ENCODE measurements at regions of chr1 and their contacts with region 1.

Region 1: DNA sequence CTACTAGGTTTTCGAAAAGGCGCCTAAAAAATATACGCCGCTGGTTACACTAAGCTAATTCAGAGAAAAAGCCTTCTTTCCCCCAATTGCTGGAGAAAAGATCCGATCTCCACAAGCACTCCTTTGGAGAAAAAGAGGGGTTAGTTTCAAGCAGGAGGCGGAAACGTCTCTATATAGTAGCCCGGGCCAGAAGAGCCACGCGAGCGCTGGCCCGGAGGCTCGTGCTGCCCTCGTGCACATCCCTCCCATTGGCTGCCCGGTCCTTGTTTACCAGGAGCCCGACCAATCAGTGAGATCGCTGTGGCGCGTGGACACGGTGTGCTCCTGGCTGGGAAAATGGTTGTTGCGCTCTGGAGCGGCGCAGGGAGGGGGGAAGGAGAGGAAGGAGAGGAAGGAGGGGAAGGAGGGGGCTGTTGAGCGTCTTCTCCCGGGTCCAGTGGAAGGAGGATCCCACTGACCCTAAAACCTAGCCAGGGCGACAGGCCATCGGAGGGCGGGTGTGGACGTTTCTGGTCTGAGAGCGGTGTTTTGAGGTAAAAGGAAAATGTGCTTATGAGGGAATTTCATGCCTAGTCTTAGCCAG is at the start of gene TXNIP:
- DNase-seq: peak; percentile 97
- H3K4me3 Mint-ChIP-seq: peak within 1 kb of the TSS; percentile 88
- H3K27ac Mint-ChIP-seq: peak within 1 kb of the TSS; percentile 92
- H3K4me1 Mint-ChIP-seq: peaks cover 63% of the 10 kb centered on the region
- H3K27me3 Mint-ChIP-seq: no peaks in the 10 kb centered on the region
- total RNA-seq, gene TXNIP: 82.6 to 88.8 TPM

Region 2: DNA sequence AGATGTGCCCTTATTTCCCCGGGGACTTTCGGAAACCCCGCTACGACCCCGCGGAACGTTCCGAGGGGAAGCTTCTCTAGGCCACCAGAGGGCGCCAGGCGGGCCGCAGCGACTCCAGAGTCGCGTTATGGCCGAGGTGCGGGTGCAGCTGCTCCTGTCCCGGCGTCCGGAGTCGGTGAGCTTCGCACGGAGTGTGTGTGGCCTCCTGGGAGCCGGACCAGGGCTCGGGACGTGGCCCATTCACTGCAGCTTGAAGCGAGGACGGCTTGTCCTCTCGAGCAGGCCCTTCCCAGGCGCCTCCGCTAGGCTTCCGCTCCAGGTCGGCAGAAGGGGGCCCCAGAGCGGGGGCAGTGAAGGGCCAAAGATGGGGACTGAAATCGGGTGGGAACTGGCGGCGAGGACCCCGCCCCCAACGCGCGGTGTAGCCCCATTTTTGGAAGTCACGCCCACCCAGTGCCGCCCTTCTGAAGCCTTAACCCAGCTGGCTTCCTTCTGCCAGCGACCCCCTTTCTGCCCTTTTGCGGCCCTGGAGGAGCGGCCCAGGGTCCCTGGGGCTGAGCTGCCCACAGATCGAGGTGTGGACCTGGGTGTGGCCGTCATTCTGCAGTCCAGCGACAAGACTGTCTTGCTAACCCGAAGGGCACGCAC is 150.9 kb before region 1 on chr1 and contains the start of gene NUDT17:
- CTCF ChIA-PET with region 1: no interaction called
- POLR2A ChIA-PET with region 1: no interaction called
- intact Hi-C with region 1: no loop called
- DNase-seq: peak; percentile 80
- H3K4me3 Mint-ChIP-seq: no peak within 1 kb of the TSS
- H3K27ac Mint-ChIP-seq: peak within 1 kb of the TSS; percentile 12
- H3K4me1 Mint-ChIP-seq: peaks cover 11% of the 10 kb centered on the region
- H3K27me3 Mint-ChIP-seq: no peaks in the 10 kb centered on the region
- total RNA-seq, gene NUDT17: 2.8 to 3.8 TPM

Region 3: GRCh38 chr1:145918144-145918992 is 78.2 kb before region 1 on chr1 and contains the start of gene PEX11B:
- CTCF ChIA-PET with region 1: no interaction called
- POLR2A ChIA-PET with region 1: interaction called, 4 read pairs
- intact Hi-C with region 1: loop called (anchors 1 kb)
- DNase-seq: peak; percentile 94
- H3K4me3 Mint-ChIP-seq: peak within 1 kb of the TSS; percentile 90
- H3K27ac Mint-ChIP-seq: peak within 1 kb of the TSS; percentile 96
- H3K4me1 Mint-ChIP-seq: peaks cover 45% of the 10 kb centered on the region
- H3K27me3 Mint-ChIP-seq: no peaks in the 10 kb centered on the region
- total RNA-seq, gene PEX11B: 22.8 to 25.6 TPM

Region 4: DNA sequence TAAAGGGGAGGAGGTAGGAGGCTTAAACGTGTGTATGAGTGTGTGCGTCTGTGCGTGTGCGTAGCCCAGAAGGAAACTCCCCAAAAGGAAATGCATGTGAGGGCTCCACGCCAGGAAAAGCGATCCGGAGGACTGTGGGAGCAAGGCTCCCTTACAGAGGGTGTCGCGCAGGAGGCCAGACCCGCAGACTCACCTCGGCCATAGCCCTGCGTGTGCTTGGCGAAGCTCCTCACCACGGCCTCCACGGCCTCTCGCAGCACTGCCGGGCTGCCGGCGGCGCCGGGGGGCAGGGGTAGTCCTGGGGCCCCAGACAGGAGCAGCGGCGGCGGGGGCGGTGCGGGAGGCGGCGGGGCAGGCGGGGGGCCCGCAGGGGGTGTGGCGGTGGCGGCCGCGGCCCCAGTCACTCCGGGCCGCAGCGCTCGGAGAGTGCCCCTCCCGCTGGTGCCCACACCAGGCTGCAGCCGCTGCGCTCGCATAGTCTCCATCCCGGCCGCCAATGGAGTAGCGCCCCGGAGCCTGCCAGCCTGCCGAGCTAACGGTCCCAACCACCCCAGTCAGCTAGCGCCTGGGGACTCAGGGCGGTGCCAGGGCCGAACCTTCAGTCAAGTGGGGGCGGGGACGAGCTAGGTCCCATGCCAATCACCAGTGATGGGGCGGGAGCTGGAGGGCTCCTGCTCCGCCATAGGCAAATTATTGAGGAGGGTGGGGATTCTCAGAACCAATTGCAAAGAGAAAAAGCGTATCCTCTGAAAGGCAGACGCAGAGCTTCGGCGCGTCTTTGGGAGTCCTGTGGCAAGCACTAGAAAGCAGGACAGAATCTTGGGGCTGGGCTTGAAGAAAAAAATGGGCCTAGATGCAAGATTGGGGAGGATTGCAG is 38.8 kb before region 1 on chr1 and contains the start of gene LIX1L:
- CTCF ChIA-PET with region 1: interaction called, 11 read pairs
- POLR2A ChIA-PET with region 1: interaction called, 5 read pairs
- intact Hi-C with region 1: loop called (anchors 1 kb)
- DNase-seq: peak; percentile 97
- H3K4me3 Mint-ChIP-seq: peak within 1 kb of the TSS; percentile 87
- H3K27ac Mint-ChIP-seq: peak within 1 kb of the TSS; percentile 79
- H3K4me1 Mint-ChIP-seq: peaks cover 57% of the 10 kb centered on the region
- H3K27me3 Mint-ChIP-seq: no peaks in the 10 kb centered on the region
- total RNA-seq, gene LIX1L: 46.6 to 47.8 TPM

Region 5: DNA sequence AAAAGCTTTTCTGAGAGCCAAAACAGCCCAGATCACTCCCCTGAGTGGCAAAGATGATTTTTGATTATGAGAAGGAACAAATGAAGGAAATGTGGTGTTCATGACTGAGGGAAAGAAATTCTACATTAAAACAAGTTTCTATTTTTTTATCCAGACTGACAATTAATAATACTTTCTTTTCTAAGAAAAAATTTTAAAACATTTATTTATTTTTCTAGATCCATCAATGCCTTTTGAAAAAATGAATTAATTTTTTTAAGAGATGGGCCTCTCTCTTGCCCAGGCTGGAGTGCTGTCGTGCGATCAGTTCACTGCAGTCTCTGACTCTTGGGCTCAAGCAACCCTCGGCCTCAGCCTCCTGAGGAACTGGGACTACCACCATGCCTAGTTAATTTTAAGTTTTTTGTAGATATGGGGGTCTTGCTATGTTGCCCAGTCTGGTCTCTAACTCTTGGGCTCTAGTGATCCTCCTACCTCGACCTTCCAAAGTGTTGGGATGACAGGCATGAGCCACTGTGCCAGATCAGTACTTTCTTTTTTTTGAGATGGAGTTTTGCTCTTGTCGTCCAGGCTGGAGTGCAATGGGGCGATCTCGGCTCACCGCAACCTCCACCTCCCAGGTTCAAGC is 11.1 kb after region 1 on chr1:
- CTCF ChIA-PET with region 1: interaction called, 13 read pairs
- POLR2A ChIA-PET with region 1: interaction called, 8 read pairs
- intact Hi-C with region 1: no loop called
- DNase-seq: no peak
- H3K4me3 Mint-ChIP-seq: no peak overlapping the region
- H3K27ac Mint-ChIP-seq: peak overlapping the region; percentile 76
- H3K4me1 Mint-ChIP-seq: peaks cover 40% of the 10 kb centered on the region
- H3K27me3 Mint-ChIP-seq: no peaks in the 10 kb centered on the region

Measured in activated CD4-positive, alpha-beta memory T cell treated with anti-CD3 and anti-CD28 coated beads for 36 hours (primary cell).